Tibial artery (tissue), 4 donors: ENCODE measurements at regions of chr1 and their contacts with region 1.

Region 1: GRCh38 chr1:232630047-232630893 is at the start of gene SIPA1L2:
- DNase-seq: peak; percentile 93 to 96
- H3K4me3 ChIP-seq: peak within 1 kb of the TSS; percentile 70 to 92
- H3K27ac ChIP-seq: peak within 1 kb of the TSS; percentile 88
- H3K4me1 ChIP-seq: peaks cover 0 to 15% (median 3%) of the 10 kb centered on the region in 4 donors
- H3K27me3 ChIP-seq: no peaks in the 10 kb centered on the region
- CTCF ChIP-seq: peak; percentile 8 to 20

Region 2: DNA sequence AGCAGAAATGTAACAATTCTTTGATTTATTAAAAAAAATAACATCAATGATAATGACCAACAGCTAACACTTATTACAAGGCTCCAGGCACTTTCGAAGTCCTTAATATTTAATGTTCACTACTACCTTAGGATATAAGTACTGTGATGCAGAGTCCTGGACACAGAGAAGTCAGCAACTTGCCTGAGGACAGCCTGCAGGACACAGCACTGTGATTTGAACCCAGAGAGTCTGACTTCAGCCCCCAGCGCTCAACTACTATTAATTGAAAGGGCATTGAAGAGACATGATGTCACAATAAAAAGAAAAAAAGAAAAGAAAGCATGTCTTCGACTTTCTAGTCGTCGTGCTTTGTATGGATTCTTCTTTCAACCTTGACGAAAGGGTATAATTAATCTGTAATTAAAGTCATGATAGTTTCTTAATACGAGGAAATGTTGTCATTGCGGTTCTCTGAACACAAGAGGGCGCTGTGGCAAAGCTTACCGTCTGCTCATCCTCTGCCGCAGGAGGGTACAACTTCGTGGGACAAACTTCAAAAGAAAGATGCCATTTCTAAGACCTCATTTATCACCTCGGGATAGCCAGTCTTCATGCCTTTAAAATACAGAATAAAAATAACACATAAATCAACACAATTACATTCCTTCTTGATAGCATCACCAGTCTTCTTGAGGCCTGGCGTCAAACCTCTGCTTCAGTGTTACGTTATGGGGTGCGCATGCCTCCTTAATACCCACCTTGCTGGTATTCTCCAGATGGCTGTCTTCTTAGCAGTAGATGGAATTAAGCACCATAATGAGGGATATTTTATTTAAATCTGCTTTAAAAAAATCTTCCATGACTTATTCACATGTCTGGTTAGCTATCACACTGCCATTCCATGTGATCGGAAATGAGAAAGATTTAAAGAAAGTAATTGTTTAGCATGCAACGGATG is 763.6 kb before region 1 on chr1:
- intact Hi-C with region 1: loop called (anchors 10 kb)
- DNase-seq: no peak
- H3K4me3 ChIP-seq: no peak overlapping the region
- H3K27ac ChIP-seq: no peak overlapping the region
- H3K4me1 ChIP-seq: no peaks in the 10 kb centered on the region
- H3K27me3 ChIP-seq: no peaks in the 10 kb centered on the region
- CTCF ChIP-seq: peak; percentile 72 to 75